ENCODE measurements at regions of chrX and their contacts with region 1.

Region 1: DNA sequence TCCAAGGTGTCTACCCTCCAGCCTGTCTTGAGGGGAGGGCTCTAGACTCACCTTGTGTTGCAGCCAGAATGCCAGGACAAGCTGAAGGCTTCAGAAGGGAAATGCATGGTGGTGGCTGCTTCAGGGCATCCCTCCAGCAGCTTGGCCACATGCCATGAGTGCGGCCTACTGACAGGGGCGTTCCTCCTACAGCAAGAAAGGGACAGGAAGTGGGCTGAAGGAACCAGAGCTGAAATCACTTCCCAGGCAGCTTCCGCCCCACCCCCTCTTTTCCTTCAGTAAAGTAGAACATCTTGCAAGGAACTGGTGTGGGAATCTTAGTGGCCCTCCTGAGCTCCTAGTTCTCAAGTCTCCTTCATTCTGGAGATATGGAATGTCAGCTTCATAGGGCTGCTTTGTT is 167.5 kb upstream of the DGKK start:
- DNase-seq: peak; percentile 41 to 65
- ATAC-seq: no peak
- H3K4me3 ChIP-seq: no peak overlapping the region
- H3K27ac ChIP-seq: no peak overlapping the region
- H3K4me1 ChIP-seq: no peaks in the 10 kb centered on the region
- H3K27me3 ChIP-seq: peaks cover 0 to 9% (median 0%) of the 10 kb centered on the region in 3 donors
- CTCF ChIP-seq: no peak

Region 2: GRCh38 chrX:49754233-49754857 is 883.8 kb before region 1 on chrX:
- intact Hi-C with region 1: no loop called
- DNase-seq: peak; percentile 20 to 56
- ATAC-seq: peak; percentile 64 to 85 (median 76)
- H3K4me3 ChIP-seq: no peak overlapping the region
- H3K27ac ChIP-seq: no peak overlapping the region
- H3K4me1 ChIP-seq: no peaks in the 10 kb centered on the region
- H3K27me3 ChIP-seq: peaks cover 0 to 32% (median 0%) of the 10 kb centered on the region in 3 donors
- CTCF ChIP-seq: peak; percentile 71

Region 3: DNA sequence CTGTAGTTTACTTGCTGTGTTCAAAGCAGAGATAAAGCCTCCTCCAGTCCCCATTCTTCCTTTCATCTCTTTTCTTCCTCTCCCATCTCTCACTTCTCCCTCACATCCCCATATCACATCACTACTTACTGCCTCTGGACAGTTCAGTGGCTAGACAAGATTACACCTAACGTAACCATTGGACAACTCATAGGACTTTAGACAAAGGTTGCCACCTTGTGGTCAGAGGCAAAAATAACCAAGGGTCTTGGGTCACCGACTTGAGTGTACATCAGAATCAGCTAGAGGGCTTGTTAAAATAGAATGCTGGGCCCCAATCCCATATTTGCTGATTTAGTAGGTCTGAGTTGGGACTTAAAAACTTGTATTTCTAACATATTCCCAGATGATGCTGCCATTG is 58.2 kb before region 1 on chrX:
- intact Hi-C with region 1: loop called in 1 of 2 experiments (anchors 10 kb)
- DNase-seq: no peak
- ATAC-seq: no peak
- H3K4me3 ChIP-seq: no peak overlapping the region
- H3K27ac ChIP-seq: no peak overlapping the region
- H3K4me1 ChIP-seq: no peaks in the 10 kb centered on the region
- H3K27me3 ChIP-seq: peaks cover 0 to 18% (median 0%) of the 10 kb centered on the region in 3 donors
- CTCF ChIP-seq: peak; percentile 56

Region 4: GRCh38 chrX:50594788-50595187 is 43.3 kb before region 1 on chrX:
- intact Hi-C with region 1: no loop called
- DNase-seq: no peak
- ATAC-seq: no peak
- H3K4me3 ChIP-seq: no peak overlapping the region
- H3K27ac ChIP-seq: peak overlapping the region; percentile 23
- H3K4me1 ChIP-seq: no peaks in the 10 kb centered on the region
- H3K27me3 ChIP-seq: peaks cover 0 to 4% (median 0%) of the 10 kb centered on the region in 3 donors
- CTCF ChIP-seq: no peak

Region 5: DNA sequence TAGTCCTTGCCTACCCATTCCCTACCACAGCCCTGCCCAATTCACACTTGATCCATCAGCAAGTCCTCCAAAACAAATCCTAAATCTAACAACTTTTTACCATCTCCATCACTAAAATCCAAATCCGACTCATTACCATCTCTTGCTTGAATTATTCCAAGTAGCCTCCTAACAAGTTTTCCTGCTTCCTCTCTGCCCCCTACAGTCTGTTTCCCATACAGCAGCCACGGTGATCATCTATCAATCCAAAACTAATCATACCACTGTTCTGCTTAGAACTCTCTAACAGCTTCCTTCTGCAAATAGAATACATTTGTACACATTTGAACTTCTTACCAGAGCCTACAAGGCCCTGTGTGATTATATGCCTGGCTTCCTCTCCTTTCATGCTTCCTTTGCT is 42.9 kb after region 1 on chrX:
- intact Hi-C with region 1: no loop called
- DNase-seq: no peak
- ATAC-seq: no peak
- H3K4me3 ChIP-seq: no peak overlapping the region
- H3K27ac ChIP-seq: no peak overlapping the region
- H3K4me1 ChIP-seq: no peaks in the 10 kb centered on the region
- H3K27me3 ChIP-seq: peaks cover 0 to 46% (median 0%) of the 10 kb centered on the region in 3 donors
- CTCF ChIP-seq: peak; percentile 23